ENCODE measurements at regions of chr7 and their contacts with region 1.

Region 1: GRCh38 chr7:44082541-44083207 is 344 bp upstream of the POLM start:
- DNase-seq: peak; percentile 98
- H3K4me3 Mint-ChIP-seq: peak overlapping the region; percentile 80
- H3K27ac Mint-ChIP-seq: peak overlapping the region; percentile 67
- H3K4me1 Mint-ChIP-seq: peaks cover 29% of the 10 kb centered on the region
- H3K27me3 Mint-ChIP-seq: no peaks in the 10 kb centered on the region

Region 2: GRCh38 chr7:44044315-44045225 is 38.1 kb before region 1 on chr7 and contains the start of gene DBNL:
- intact Hi-C with region 1: loop called (anchors 1 kb)
- DNase-seq: peak; percentile 89
- H3K4me3 Mint-ChIP-seq: peak within 1 kb of the TSS; percentile 90
- H3K27ac Mint-ChIP-seq: peak within 1 kb of the TSS; percentile 87
- H3K4me1 Mint-ChIP-seq: peaks cover 30% of the 10 kb centered on the region
- H3K27me3 Mint-ChIP-seq: no peaks in the 10 kb centered on the region
- total RNA-seq, gene DBNL: 131 and 143 TPM in 2 replicates

Region 3: DNA sequence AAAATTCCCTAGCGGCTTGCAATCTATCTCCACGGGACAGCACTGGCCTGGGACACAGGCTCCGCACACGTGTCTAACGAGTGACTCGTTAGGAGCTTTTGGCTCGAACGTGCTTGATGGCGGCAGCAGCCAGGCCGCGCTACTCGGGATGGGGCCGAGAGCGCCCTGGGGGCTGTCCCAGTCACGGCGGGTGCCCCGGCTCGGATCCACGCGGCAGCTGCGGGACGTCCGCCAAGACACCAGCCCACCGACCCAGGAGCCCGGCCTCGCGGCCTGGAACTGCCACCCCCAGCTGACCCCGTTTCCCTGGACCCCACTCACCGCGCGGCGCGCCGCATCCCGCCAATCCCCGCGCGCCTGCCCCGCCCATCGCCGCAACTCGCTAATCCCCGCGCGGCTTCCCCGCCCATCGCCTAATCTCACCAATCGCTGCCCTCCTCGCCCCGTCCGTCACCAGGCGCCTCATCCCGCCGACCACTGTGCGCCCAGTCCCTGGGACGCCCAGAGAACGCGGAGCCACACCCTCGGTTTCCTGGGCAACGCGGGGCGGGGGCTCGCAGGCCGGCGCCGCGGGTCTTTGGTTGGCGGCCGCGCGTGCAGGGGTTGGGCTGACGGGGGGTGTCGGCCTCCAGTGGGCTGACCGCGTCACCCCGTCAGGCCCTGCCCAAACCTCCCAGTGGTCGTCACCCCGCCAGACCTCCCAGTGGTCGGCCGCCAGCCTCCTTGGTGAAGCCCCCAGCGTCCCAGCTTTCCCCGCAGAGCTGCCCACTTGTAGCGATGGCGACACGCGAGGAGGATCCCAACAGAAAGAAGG is 40.7 kb after region 1 on chr7 and contains the start of gene POLD2:
- intact Hi-C with region 1: loop called (anchors 1 kb)
- DNase-seq: peak; percentile 98
- H3K4me3 Mint-ChIP-seq: peak within 1 kb of the TSS; percentile 86
- H3K27ac Mint-ChIP-seq: peak within 1 kb of the TSS; percentile 81
- H3K4me1 Mint-ChIP-seq: peaks cover 31% of the 10 kb centered on the region
- H3K27me3 Mint-ChIP-seq: peaks cover 15% of the 10 kb centered on the region
- total RNA-seq, gene POLD2: 205 and 215 TPM in 2 replicates

Region 4: DNA sequence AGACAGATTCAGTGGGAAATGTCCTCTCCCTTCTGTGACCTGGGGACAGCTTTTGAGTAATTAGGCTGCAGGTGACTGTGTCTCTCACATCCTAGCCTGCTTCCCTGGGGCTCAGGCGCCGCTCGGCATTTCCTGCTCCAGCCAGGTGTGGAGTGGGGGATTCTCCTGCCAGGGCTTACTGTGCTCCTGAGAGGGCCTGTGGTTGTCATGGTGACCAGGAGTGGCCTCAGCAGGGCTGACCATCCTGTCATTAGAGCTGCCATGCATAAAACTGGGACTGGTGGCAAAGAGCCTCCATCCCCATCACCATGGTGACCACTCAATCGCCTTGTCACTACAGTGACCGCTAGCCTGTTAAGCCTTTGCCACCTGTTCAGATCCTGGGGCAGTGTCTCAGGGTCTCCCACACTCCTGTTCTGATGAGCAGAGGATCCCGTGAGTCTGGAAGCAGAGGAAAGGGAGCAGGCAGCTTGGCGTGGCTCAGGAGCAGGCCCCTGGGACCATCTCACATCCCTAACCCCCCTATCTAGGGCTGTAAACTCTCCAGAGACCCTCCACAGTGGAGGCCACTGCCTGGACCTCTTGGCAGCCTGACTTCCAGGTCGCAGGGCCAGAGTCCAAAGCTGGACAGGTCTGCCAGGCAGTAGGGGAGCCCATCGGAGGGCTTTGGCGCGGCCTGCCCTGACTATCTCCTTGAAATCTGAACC is 106.8 kb after region 1 on chr7 and contains the start of gene GCK:
- intact Hi-C with region 1: no loop called
- DNase-seq: no peak
- H3K4me3 Mint-ChIP-seq: no peak within 1 kb of the TSS
- H3K27ac Mint-ChIP-seq: no peak within 1 kb of the TSS
- H3K4me1 Mint-ChIP-seq: peaks cover 6% of the 10 kb centered on the region
- H3K27me3 Mint-ChIP-seq: peaks cover 7% of the 10 kb centered on the region
- total RNA-seq, gene GCK: 1.8 and 2.3 TPM in 2 replicates

Region 5: DNA sequence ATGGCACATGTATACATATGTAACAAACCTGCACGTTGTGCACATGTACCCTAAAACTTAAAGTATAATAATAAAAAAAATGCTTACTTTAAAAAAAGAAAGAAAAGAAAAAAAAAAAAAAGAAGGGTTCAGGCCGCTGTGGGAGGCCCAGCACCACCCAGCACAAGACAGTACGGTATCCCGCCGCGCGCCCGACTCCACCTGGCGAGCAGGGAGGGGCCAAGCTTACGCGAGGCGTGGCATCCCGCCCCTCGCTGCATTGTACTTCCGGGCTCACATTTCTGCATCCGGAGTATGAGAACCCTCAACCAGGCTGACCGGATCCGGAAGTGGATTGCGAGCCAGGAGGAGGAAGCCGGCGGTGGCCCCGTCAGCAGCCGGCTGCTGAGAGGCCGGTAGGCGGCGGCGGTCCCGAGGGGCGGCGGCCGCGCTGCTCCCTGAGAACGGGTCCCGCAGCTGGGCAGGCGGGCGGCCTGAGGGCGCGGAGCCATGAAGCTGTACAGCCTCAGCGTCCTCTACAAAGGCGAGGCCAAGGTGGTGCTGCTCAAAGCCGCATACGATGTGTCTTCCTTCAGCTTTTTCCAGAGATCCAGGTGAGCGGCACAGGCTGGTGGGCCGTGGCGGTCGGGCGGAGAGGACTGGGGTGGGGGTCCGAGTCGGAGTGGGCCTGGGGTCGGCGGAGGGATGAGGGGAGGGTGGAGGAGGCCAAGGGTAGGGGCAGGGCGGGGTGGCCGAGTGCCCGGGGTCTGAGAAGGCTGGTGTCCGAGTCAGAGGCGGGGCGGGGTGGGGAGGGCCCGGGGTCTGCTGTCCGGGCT is 118.2 kb after region 1 on chr7 and contains the start of gene YKT6:
- intact Hi-C with region 1: loop called (anchors 2 kb)
- DNase-seq: peak; percentile 92
- H3K4me3 Mint-ChIP-seq: peak within 1 kb of the TSS; percentile 88
- H3K27ac Mint-ChIP-seq: peak within 1 kb of the TSS; percentile 74
- H3K4me1 Mint-ChIP-seq: peaks cover 29% of the 10 kb centered on the region
- H3K27me3 Mint-ChIP-seq: no peaks in the 10 kb centered on the region
- total RNA-seq, gene YKT6: 73.1 and 76.4 TPM in 2 replicates

Region 6: DNA sequence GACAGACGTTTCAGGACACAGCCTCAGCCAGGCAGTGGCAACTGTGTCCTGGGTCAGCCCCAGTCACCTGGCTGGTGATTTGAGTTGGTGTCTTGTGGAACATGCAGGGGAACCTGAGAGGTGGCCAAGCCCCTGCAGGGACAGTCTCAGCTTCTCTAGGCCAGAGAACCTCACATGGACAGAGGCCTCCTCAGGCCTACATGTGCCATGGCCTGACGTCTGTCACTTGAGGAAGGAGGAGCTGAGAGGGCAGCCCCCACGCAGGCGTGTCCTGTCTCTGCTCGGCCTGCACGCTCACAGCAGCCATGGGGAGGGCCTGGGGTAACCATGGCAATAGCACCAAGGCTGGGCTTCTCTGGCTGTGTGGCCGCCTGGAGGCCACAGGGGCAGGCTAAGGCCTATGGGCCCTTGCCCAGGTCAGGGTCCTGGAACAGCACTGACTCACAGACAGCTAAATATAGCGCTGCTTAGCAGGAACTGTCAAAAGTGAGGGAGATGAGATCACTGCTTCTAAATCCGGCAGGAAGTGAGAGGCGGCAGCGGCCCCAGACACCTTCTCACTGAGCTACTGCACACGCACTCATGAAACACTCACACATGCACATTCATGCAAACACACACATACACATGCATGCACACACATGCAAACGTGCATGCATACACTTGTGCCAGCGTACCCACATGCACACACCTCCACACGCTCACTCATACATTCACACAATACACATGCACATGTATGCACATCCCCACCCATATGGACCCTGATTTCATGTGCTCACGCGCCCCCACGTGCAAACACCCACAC is 175.1 kb after region 1 on chr7:
- intact Hi-C with region 1: loop called (anchors 1 kb)
- DNase-seq: peak; percentile 64
- H3K4me3 Mint-ChIP-seq: peak overlapping the region; percentile 9
- H3K27ac Mint-ChIP-seq: peak overlapping the region; percentile 61
- H3K4me1 Mint-ChIP-seq: peaks cover 30% of the 10 kb centered on the region
- H3K27me3 Mint-ChIP-seq: no peaks in the 10 kb centered on the region

Measured in activated T-helper 2 cell treated with anti-CD3 and anti-CD28 coated beads, Interferon-gamma antibody, Interleukin-2, Interleukin-4, amounts not matched to agents 10 μg/mL and 5 μg/mL and 100 μg/mL, durations not matched to agents 14 hours and 24 hours and 36 hours (primary cell).